Activated B cell treated with CpG ODN at 0.5 μM for 24 hours (primary cell): ENCODE measurements at regions of chr7 and their contacts with region 1.

Region 1: GRCh38 chr7:74289018-74289658 is at the start of gene CLIP2:
- DNase-seq: peak; percentile 69
- ATAC-seq: peak; percentile 62
- H3K4me3 Mint-ChIP-seq: peak within 1 kb of the TSS; percentile 91
- H3K27ac Mint-ChIP-seq: peak within 1 kb of the TSS; percentile 91
- H3K4me1 Mint-ChIP-seq: peaks cover 62% of the 10 kb centered on the region
- H3K27me3 Mint-ChIP-seq: no peaks in the 10 kb centered on the region
- CTCF ChIP-seq: no peak
- total RNA-seq, gene CLIP2: 60.4 and 61.7 TPM in 2 replicates

Region 2: DNA sequence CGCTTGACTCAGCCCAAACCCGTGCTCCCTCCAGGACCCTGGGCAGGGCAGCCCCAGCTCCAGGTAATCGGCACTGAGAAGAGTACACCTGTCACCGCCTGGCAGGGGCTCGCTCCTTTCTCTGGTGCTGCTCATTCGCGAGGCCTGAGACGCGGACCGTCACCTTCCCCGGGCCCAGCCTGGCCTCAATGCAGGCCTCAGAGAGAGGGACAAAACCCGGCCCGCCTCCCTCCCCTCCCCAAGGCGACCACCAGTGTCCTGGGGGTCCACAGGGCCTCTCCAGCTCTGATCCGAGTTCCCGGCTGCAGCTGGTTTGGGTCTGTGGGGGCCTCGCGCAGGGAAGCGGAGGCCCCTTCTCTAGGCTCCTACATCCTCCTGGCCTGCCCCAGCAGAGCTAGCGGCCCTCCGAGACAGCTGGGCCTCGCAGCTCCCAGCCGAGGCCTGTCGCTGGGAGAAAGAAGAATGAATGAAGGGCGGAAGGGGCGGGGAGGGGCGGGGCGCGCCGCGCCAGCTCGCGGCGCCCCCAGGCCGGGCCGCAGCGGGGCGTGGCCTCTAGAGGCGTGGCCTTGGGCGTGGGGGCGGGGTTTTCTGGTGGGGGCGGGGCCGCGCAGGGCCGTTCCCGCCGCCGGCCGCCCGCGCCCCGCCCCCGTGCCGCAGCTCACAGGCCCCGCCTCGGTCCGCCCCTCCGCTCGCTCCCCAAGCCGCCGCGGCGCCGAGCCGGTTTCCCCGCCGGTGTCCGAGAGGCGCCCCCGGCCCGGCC is 205.8 kb before region 1 on chr7 and contains the start of gene LIMK1:
- CTCF ChIA-PET with region 1: no interaction called
- POLR2A ChIA-PET with region 1: interaction called, 6 read pairs
- intact Hi-C with region 1: loop called (anchors 5 kb)
- DNase-seq: peak; percentile 86
- ATAC-seq: peak; percentile 95
- H3K4me3 Mint-ChIP-seq: peak within 1 kb of the TSS; percentile 84
- H3K27ac Mint-ChIP-seq: peak within 1 kb of the TSS; percentile 53
- H3K4me1 Mint-ChIP-seq: peaks cover 7% of the 10 kb centered on the region
- H3K27me3 Mint-ChIP-seq: no peaks in the 10 kb centered on the region
- CTCF ChIP-seq: no peak
- total RNA-seq, gene LIMK1: 59.6 and 62.7 TPM in 2 replicates

Region 3: DNA sequence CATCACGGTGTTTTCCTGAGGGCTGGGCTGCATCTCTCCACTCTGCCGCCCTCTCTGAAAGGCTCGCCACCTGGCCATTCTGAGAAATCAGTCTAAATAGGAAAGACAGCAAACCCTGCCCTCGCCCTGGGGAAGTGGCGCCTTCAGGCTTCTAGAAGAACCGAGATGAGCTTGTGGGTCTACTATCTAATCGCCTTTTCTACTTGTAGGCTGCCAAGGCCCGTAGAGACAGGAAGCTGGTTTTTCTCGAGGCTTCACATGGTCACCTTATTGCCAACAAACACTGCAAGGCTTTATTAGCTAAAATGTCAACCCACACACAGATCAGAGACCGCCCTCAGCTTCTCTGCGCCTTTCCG is 57.9 kb before region 1 on chr7:
- CTCF ChIA-PET with region 1: no interaction called
- POLR2A ChIA-PET with region 1: interaction called, 32 read pairs
- intact Hi-C with region 1: loop called (anchors 2 kb)
- DNase-seq: peak; percentile 63
- ATAC-seq: peak; percentile 85
- H3K4me3 Mint-ChIP-seq: peak overlapping the region; percentile 55
- H3K27ac Mint-ChIP-seq: peak overlapping the region; percentile 92
- H3K4me1 Mint-ChIP-seq: peaks cover 68% of the 10 kb centered on the region
- H3K27me3 Mint-ChIP-seq: no peaks in the 10 kb centered on the region
- CTCF ChIP-seq: no peak

Region 4: GRCh38 chr7:74254129-74254857 is 34.8 kb before region 1 on chr7 and contains the start of gene RFC2:
- CTCF ChIA-PET with region 1: interaction called, 3 read pairs
- POLR2A ChIA-PET with region 1: interaction called, 10 read pairs
- intact Hi-C with region 1: loop called (anchors 1 kb)
- DNase-seq: peak; percentile 100
- ATAC-seq: peak; percentile 92
- H3K4me3 Mint-ChIP-seq: peak within 1 kb of the TSS; percentile 95
- H3K27ac Mint-ChIP-seq: peak within 1 kb of the TSS; percentile 93
- H3K4me1 Mint-ChIP-seq: peaks cover 50% of the 10 kb centered on the region
- H3K27me3 Mint-ChIP-seq: no peaks in the 10 kb centered on the region
- CTCF ChIP-seq: no peak
- total RNA-seq, gene RFC2: 44.0 and 45.8 TPM in 2 replicates

Region 5: DNA sequence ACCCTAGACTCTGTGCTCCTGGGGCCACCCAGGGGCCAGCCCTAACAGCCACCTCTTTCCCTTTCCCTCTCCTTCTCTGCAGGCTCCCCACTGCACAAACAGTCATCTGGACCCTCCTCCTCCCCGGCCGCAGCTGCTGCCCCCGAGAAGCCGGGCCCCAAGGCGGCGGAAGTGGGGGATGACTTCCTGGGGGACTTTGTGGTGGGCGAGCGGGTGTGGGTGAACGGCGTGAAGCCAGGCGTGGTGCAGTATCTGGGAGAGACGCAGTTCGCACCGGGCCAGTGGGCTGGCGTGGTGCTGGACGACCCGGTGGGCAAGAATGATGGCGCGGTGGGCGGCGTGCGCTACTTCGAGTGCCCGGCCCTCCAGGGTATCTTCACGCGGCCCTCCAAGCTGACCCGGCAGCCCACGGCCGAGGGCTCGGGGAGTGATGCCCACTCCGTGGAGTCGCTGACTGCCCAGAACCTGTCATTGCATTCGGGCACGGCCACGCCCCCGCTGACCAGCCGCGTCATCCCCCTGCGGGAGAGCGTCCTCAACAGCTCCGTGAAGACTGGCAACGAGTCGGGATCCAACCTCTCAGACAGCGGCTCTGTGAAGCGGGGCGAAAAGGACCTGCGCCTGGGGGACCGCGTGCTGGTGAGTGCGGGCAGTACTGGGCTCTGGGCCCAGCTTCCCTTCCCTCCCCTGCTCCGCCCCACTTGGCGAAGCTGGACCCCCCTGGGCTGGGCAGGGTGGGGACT is 49.4 kb after region 1 on chr7:
- CTCF ChIA-PET with region 1: no interaction called
- POLR2A ChIA-PET with region 1: no interaction called
- intact Hi-C with region 1: loop called (anchors 5 kb)
- DNase-seq: no peak
- ATAC-seq: no peak
- H3K4me3 Mint-ChIP-seq: no peak overlapping the region
- H3K27ac Mint-ChIP-seq: no peak overlapping the region
- H3K4me1 Mint-ChIP-seq: peaks cover 5% of the 10 kb centered on the region
- H3K27me3 Mint-ChIP-seq: no peaks in the 10 kb centered on the region
- CTCF ChIP-seq: no peak

Region 6: DNA sequence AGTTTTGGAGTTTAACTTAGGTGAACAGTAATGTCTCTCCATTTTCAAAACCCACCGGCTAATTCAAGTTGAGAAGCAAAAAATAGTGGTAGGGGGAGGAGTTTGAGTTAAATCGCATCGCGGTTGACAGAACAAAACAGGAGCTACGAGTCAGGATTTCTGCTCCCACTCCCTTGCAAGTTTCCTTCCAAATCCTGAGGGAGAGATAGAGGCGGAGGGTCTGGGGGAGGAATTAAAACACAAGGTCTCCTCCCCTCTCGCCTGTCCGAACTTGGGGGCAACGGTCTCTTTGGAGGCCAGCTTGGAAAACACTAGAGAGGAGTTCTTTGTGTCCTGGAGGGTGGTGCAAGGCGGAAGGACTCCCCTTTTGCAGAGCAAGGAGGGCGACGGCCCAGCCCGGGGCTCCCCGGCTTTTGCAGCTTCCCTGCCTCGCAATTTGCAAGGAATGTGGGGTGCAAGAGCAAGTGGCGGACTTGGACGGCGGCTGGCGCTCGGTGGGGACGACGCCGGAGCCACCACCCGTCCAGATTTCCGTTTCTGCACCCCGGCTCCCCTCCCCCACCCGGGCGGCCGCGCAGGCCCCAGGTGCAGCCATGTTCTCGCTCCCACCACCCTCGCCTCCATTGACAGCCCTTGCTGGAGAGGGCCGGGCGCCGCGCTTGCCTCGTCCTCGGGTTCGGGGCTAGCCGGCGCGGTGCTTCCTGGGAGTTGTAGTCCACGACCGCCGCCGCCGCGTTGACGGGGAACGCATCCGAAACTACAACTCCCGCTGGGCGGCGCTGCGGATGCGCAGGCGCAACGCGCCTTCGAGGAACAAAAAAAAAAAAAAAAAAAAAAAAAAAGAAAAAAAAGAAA is 367.9 kb after region 1 on chr7:
- CTCF ChIA-PET with region 1: no interaction called
- POLR2A ChIA-PET with region 1: no interaction called
- intact Hi-C with region 1: loop called (anchors 5 kb)
- DNase-seq: peak; percentile 96
- ATAC-seq: peak; percentile 58
- H3K4me3 Mint-ChIP-seq: peak overlapping the region; percentile 94
- H3K27ac Mint-ChIP-seq: peak overlapping the region; percentile 95
- H3K4me1 Mint-ChIP-seq: peaks cover 53% of the 10 kb centered on the region
- H3K27me3 Mint-ChIP-seq: no peaks in the 10 kb centered on the region
- CTCF ChIP-seq: no peak